Activated CD4-positive, alpha-beta memory T cell treated with anti-CD3 and anti-CD28 coated beads for 36 hours (primary cell): ENCODE measurements at regions of chr18 and their contacts with region 1.

Region 1: DNA sequence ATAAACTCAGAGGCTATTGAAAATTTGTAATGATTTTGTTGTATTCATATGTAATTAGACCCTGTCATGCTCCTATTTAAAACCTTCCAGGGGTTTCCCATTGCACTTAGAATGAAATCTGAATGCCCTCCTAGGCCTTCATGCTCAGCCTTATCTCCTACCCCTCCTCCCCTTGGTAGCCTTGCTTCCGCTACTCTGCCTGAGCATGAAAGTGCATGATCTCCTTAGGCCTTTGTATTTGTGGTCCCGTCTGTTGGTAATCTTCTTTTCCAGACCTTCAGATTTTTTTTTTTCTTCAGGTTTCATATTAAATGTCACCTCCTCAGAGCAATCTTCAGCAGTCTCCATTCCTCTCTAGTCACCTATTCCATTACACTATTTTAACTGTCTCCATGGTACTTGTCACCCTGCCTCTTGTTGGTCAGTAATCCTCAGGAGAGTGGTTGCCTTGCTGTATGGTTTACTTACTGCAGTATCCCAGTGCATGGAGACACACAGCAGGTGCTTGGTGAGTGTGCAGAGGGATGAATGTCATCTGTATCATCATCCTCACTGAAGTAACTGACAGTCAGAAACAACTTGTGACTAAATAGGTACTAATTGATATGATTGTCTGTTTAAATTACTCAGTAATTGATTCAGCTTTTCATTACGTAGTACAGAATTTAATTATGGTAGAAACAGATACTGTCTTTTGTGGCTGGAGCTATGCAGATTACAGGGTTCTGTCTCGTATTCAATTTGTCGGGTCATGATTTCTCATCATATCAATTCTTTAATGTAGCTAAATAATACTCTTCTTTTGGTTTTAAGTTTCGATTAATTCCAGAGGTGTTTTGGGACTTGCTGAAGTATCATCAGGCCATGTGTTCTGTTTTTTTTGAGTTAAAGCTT is 63.9 kb downstream of the PHLPP1 start:
- DNase-seq: peak; percentile 22
- H3K4me3 Mint-ChIP-seq: no peak overlapping the region
- H3K27ac Mint-ChIP-seq: no peak overlapping the region
- H3K4me1 Mint-ChIP-seq: peaks cover 38% of the 10 kb centered on the region
- H3K27me3 Mint-ChIP-seq: no peaks in the 10 kb centered on the region

Region 2: DNA sequence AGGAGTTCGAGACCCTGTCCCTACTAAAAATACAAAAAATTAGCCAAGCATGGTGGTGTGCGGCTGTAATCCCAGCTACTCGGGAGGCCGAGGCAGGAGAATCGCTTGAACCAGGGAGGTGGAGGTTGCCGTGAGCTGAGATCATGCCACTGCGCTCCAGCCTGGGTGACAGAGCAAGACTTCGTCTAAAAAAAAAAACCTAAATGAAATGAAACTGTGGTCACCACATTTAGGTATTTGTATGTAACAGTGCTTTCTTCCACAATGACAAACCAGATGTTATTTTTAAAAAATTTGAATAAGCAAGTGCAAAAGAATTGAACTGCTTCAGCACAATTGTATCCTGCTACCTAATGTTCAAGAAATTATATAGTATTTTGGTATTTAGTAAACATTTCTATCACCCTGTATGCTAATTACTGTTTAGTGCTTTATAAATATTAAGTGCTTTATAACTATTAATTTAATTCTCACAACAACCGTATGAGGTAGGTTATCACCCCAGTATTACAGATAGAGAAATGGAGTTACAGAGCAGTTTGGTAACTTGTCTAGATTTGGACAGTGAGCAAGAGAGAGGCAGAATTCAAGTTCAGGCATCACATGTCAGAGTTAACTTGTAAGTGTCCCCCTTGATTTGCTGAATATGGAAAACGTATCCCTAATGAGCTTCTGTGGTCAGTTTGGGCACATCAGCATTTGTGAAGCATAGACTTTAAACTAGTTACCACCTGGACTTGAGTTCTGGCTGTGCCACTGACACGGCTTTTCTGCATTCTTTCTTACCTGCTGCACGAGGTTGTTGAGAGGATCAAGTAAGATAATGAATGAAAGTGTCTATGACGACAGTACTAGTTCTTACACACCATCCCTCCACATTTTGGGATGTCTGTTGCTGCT is 49.5 kb before region 1 on chr18:
- CTCF ChIA-PET with region 1: no interaction called
- POLR2A ChIA-PET with region 1: no interaction called
- intact Hi-C with region 1: no loop called
- DNase-seq: no peak
- H3K4me3 Mint-ChIP-seq: no peak overlapping the region
- H3K27ac Mint-ChIP-seq: no peak overlapping the region
- H3K4me1 Mint-ChIP-seq: no peaks in the 10 kb centered on the region
- H3K27me3 Mint-ChIP-seq: no peaks in the 10 kb centered on the region

Region 3: GRCh38 chr18:62741118-62741566 is 38.1 kb before region 1 on chr18:
- CTCF ChIA-PET with region 1: no interaction called
- POLR2A ChIA-PET with region 1: no interaction called
- intact Hi-C with region 1: loop called (anchors 2 kb)
- DNase-seq: peak; percentile 26
- H3K4me3 Mint-ChIP-seq: no peak overlapping the region
- H3K27ac Mint-ChIP-seq: peak overlapping the region; percentile 36
- H3K4me1 Mint-ChIP-seq: peaks cover 20% of the 10 kb centered on the region
- H3K27me3 Mint-ChIP-seq: no peaks in the 10 kb centered on the region

Region 4: GRCh38 chr18:62759704-62760402 is 19.4 kb before region 1 on chr18:
- CTCF ChIA-PET with region 1: no interaction called
- POLR2A ChIA-PET with region 1: no interaction called
- intact Hi-C with region 1: loop called (anchors 2 kb)
- DNase-seq: no peak
- H3K4me3 Mint-ChIP-seq: no peak overlapping the region
- H3K27ac Mint-ChIP-seq: no peak overlapping the region
- H3K4me1 Mint-ChIP-seq: no peaks in the 10 kb centered on the region
- H3K27me3 Mint-ChIP-seq: no peaks in the 10 kb centered on the region